ENCODE measurements at regions of chr7 and their contacts with region 1.

Region 1: GRCh38 chr7:112665726-112666125 is 124.5 kb downstream of the TMEM168 start:
- DNase-seq: peak; percentile 24
- H3K4me3 ChIP-seq: no peak overlapping the region
- H3K27ac ChIP-seq: no peak overlapping the region
- H3K4me1 ChIP-seq: peaks cover 9% of the 10 kb centered on the region
- H3K27me3 ChIP-seq: no peaks in the 10 kb centered on the region
- CTCF ChIP-seq: peak; percentile 16 to 61

Region 2: DNA sequence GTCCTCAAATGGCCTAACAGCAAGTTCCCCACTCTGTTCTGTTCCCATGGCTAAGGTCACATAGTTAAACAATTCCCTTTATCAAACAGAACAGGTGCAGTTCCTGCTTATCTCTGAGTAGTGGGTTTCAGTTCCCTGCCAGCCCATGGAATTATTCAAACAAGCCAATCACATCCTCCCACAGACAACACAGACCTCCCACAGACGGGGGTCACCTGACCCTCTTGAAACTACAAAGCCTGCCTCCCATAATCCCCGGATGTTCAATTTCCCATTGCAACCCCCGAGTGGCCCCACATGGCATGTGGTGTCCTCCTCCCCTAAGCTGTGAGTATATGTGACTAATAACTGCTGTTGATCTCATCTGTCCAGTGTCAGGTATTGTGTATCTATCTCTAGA is 60.4 kb after region 1 on chr7:
- CTCF ChIA-PET with region 1: no interaction called
- dilution Hi-C with region 1: no loop called
- in situ Hi-C with region 1: no loop called
- intact Hi-C with region 1: no loop called
- DNase-seq: no peak
- H3K4me3 ChIP-seq: no peak overlapping the region
- H3K27ac ChIP-seq: no peak overlapping the region
- H3K4me1 ChIP-seq: peaks cover 13% of the 10 kb centered on the region
- H3K27me3 ChIP-seq: no peaks in the 10 kb centered on the region
- CTCF ChIP-seq: no peak

Region 3: DNA sequence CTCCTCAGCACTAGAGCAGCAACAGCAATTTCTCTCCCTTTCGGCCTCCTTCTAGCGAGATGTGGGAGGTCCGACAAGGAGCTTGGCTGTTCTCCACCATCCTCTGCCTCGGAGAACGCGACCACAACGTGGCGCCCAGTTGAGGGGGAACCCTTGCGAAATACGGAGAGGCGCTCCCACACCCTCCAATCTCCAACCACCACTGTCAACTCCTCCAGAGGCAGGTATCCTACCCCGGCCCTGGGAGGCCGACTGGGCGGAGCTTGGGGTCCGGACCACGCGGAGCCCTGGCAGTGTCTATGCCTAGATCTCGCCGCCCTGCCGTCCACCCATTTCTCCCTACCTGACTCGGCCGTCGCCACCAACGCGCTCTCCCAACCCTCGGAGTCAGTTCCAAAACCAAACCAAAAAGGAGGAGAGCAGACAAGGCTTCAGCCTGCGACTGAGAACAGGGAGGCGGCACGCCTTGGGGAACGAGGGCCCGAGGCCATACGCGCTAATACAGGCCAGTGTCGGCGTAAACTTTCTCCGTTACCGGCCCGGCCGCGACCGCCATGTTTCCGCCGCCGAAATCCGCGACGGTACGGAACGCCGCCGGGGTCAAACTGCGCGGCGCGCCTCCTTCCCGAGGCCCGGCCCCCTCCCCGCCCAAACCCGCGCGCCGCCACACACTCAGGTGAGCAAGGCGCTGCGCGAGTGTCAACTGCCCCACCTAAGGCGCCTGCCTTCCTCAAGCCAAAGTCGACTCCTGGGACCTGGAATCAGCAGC is 124.3 kb after region 1 on chr7 and contains the start of gene TMEM168:
- CTCF ChIA-PET with region 1: no interaction called
- dilution Hi-C with region 1: no loop called
- in situ Hi-C with region 1: no loop called
- intact Hi-C with region 1: loop called (anchors 10 kb)
- DNase-seq: peak; percentile 85
- H3K4me3 ChIP-seq: peak within 1 kb of the TSS; percentile 56 to 90 (median 69)
- H3K27ac ChIP-seq: peak within 1 kb of the TSS; percentile 53
- H3K4me1 ChIP-seq: peaks cover 16% of the 10 kb centered on the region
- H3K27me3 ChIP-seq: no peaks in the 10 kb centered on the region
- CTCF ChIP-seq: no peak
- total RNA-seq, gene TMEM168: 21.6 to 33.8 TPM

Region 4: GRCh38 chr7:112869111-112869757 is 203.5 kb after region 1 on chr7:
- CTCF ChIA-PET with region 1: no interaction called
- dilution Hi-C with region 1: no loop called
- in situ Hi-C with region 1: no loop called
- intact Hi-C with region 1: loop called (anchors 1 kb)
- DNase-seq: peak; percentile 25
- H3K4me3 ChIP-seq: no peak overlapping the region
- H3K27ac ChIP-seq: no peak overlapping the region
- H3K4me1 ChIP-seq: no peaks in the 10 kb centered on the region
- H3K27me3 ChIP-seq: no peaks in the 10 kb centered on the region
- CTCF ChIP-seq: peak; percentile 89 to 91

Region 5: DNA sequence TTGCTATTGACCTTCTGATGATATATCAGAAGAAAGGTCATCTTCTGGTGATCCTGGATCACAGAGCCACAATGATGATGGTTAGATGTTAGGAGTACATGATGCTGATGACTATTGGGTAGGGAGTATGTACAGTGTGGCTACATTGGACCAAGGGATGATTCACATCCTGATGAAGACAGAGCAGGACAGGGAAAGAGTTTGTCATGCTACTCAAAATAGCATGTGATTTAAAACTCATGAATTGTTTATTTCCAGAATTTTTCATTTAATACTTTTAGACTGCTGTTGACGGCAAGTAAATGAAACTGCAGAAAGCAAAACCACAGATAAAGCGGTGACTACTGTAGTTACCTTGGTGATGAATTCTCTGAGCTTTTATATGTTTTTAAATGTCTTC is 855.7 kb after region 1 on chr7:
- CTCF ChIA-PET with region 1: no interaction called
- dilution Hi-C with region 1: no loop called
- in situ Hi-C with region 1: no loop called
- intact Hi-C with region 1: no loop called
- DNase-seq: peak; percentile 48
- H3K4me3 ChIP-seq: no peak overlapping the region
- H3K27ac ChIP-seq: no peak overlapping the region
- H3K4me1 ChIP-seq: no peaks in the 10 kb centered on the region
- H3K27me3 ChIP-seq: no peaks in the 10 kb centered on the region
- CTCF ChIP-seq: no peak

Measured in mammary epithelial cell (primary cell).